ENCODE measurements at regions of chr5 and their contacts with region 1.

Region 1: GRCh38 chr5:159444441-159445082 is 114.3 kb upstream of the IL12B start:
- DNase-seq: peak in 1 of 2 donors; percentile 12
- H3K4me3 ChIP-seq: no peak overlapping the region
- H3K27ac ChIP-seq: no peak overlapping the region
- H3K4me1 ChIP-seq: no peaks in the 10 kb centered on the region
- H3K27me3 ChIP-seq: no peaks in the 10 kb centered on the region
- CTCF ChIP-seq: peak in 5 of 6 experiments; percentile 24 to 84 (median 46)
- POLR2A ChIP-seq: no peak

Region 2: DNA sequence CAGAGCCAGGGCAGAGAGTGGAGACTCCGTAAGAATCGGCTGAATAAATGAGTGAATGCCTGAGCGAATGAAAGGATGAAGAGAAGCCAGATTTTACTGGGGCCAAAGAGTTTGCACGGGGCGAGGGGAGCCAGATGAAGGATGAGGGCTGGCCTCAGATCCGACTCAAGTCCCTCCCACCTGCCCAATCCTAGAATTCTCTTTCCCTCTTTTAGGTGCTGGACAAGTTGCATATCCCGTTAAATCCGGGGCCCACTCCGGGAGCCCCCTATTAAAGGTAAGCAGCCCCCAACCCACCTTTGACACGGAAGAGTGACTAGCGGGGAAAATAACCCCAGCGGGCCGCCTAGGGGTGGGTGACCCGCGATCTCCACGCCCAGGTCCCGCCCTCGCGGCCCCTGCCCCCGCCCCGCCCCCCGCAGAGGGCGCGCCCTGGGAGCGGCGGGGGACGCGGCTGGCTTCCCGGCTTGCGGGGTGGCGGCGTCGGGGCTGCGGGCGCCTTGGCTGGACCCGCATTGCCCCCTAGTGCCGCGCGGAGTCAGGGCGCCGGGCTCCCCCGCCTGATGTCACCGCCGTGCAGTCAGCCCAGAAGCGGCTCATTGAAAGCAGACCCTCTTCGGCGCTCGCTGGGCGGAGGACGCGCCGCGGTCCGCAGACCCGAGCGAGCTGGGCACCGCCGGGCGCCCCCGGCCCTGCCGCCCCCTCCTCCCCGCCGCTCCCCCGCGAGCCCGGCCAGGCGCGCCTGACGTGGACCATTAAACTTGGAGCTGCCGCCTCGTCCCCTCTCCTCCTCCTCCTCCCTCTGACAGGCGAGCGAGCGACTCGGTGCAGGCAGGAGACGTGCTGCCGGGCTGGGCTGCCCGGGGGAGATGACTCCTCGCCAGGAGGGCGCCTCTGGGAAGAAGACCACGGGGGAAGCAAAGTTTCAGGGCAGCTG is 471.6 kb after region 1 on chr5 and contains the start of gene ADRA1B:
- intact Hi-C with region 1: loop called (anchors 5 kb)
- DNase-seq: peak; percentile 80 to 84
- H3K4me3 ChIP-seq: peak within 1 kb of the TSS in 1 of 3 donors; percentile 26
- H3K27ac ChIP-seq: no peak within 1 kb of the TSS
- H3K4me1 ChIP-seq: peaks cover 6 to 11% of the 10 kb centered on the region in 2 donors
- H3K27me3 ChIP-seq: no peaks in the 10 kb centered on the region
- CTCF ChIP-seq: peak in 5 of 6 experiments; percentile 17 to 90 (median 74)
- POLR2A ChIP-seq: no peak
- total RNA-seq, gene ADRA1B: 1.2 to 13.2 (median 3.1) TPM

Region 3: DNA sequence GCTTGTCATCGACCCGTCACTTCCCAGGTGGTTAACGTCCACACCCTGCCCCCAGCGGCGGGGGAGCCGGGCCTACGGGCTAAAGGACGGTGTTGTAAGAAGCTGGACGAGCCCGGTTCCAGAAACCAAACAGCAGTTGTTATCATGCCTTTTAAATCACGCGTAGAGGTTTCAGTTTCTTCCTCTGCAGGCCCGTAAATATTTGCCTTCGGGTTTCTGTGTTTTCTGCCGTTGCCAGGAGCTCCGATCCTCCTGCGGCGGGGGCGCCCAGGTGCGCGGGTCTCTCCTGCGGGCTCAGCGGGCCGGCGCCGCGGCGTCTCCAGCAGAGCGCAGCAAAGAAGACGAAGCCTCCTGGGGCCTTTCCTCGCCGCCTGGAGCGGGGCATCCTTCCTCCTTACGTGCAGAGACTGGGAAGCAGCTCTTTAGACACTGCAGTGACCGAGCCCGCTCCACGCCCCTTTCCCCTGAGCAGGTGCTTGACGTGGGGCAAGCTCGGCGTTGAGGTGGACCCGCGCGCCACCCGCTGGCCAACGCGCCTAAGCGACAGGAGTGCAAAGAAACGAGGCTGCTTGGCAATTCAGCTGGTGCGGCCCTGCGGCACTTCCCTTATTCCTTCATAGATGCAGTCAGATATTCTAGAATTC is 542.6 kb after region 1 on chr5:
- intact Hi-C with region 1: loop called (anchors 5 kb)
- DNase-seq: peak; percentile 91 to 93
- H3K4me3 ChIP-seq: peak overlapping the region in 1 of 3 donors; percentile 18
- H3K27ac ChIP-seq: no peak overlapping the region
- H3K4me1 ChIP-seq: peaks cover 0 to 3% of the 10 kb centered on the region in 2 donors
- H3K27me3 ChIP-seq: no peaks in the 10 kb centered on the region
- CTCF ChIP-seq: peak; percentile 49 to 95 (median 80)
- POLR2A ChIP-seq: no peak